ENCODE measurements at regions of chr19 and their contacts with region 1.

Region 1: GRCh38 chr19:46728693-46729676 is 12.1 kb upstream of the PRKD2 start:
- DNase-seq: no peak
- H3K4me3 ChIP-seq: no peak overlapping the region
- H3K27ac ChIP-seq: peak overlapping the region; percentile 27 to 64 (median 46)
- H3K4me1 ChIP-seq: peaks cover 15 to 57% (median 48%) of the 10 kb centered on the region in 4 donors
- H3K27me3 ChIP-seq: no peaks in the 10 kb centered on the region
- CTCF ChIP-seq: peak; percentile 88 to 96 (median 91)
- EP300 ChIP-seq: no peak
- POLR2A ChIP-seq: no peak

Region 2: DNA sequence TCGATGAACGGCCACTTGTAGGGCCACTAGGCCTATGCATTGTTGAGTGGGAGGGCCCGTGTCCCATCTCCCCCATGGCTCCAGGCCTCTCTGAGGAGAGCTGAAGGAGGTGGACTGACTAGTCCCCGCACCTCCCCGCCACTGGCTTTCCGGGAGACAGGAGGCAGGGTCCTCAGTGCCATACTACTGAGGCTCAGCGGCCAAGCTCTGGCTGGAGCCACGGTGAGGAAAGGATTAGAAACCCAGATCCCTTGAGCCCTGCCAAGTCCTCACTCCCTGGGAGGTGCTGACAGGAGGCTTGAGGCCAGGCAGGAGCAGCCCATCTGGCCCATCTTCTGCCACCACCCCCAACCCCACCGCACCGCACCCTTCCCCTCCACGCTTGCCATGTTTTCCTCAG is 344.6 kb before region 1 on chr19:
- intact Hi-C with region 1: no loop called
- DNase-seq: no peak
- H3K4me3 ChIP-seq: no peak overlapping the region
- H3K27ac ChIP-seq: no peak overlapping the region
- H3K4me1 ChIP-seq: peaks cover 3 to 18% (median 10%) of the 10 kb centered on the region in 4 donors
- H3K27me3 ChIP-seq: no peaks in the 10 kb centered on the region
- CTCF ChIP-seq: no peak
- EP300 ChIP-seq: no peak
- POLR2A ChIP-seq: no peak

Region 3: GRCh38 chr19:46616631-46617322 is 112.2 kb before region 1 on chr19:
- intact Hi-C with region 1: no loop called
- DNase-seq: no peak
- H3K4me3 ChIP-seq: no peak overlapping the region
- H3K27ac ChIP-seq: peak overlapping the region; percentile 15 to 59 (median 50)
- H3K4me1 ChIP-seq: peaks cover 49 to 66% (median 62%) of the 10 kb centered on the region in 4 donors
- H3K27me3 ChIP-seq: no peaks in the 10 kb centered on the region
- CTCF ChIP-seq: peak; percentile 28 to 57 (median 38)
- EP300 ChIP-seq: no peak
- POLR2A ChIP-seq: no peak

Region 4: DNA sequence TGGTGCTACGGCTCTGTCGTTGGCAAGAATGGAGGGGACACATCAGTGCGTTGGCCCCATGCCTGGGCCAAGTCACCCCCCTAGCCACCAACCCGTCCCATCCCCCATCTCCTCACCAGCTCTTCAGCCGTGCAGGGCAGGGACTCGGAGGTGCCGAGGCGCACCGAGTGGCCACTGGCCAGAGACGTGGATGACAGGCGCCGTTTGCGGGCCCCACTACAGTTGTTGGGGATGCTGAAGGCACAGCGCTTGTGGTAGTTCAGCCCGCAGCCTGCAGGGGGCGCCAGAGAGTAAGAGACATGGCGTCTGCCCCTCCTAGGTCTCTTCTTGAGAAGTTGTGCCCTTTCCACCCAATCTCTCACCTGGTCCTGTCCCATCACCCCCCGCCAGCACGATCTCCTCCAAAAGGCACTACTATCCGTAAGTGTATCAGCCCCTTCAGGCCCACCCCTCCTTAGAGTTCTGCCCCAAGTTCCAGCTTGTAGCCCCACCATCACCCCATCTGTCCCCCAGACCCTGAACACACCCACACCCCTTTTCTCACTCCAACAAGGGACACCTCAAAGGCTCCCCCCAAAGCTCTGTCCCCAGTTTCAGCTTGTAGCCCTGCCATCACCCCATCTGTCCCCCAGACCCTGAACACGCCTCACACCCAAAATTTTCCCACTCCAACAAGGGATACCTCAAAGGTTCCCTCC is 24.5 kb before region 1 on chr19:
- intact Hi-C with region 1: loop called (anchors 2 kb)
- DNase-seq: peak; percentile 95
- H3K4me3 ChIP-seq: no peak overlapping the region
- H3K27ac ChIP-seq: no peak overlapping the region
- H3K4me1 ChIP-seq: peaks cover 0 to 8% (median 0%) of the 10 kb centered on the region in 4 donors
- H3K27me3 ChIP-seq: no peaks in the 10 kb centered on the region
- CTCF ChIP-seq: peak; percentile 93 to 98 (median 96)
- EP300 ChIP-seq: no peak
- POLR2A ChIP-seq: no peak

Region 5: GRCh38 chr19:46766569-46767317 is 37.8 kb after region 1 on chr19:
- intact Hi-C with region 1: no loop called
- DNase-seq: no peak
- H3K4me3 ChIP-seq: no peak overlapping the region
- H3K27ac ChIP-seq: no peak overlapping the region
- H3K4me1 ChIP-seq: peaks cover 0 to 10% (median 2%) of the 10 kb centered on the region in 4 donors
- H3K27me3 ChIP-seq: no peaks in the 10 kb centered on the region
- CTCF ChIP-seq: peak; percentile 52 to 75 (median 55)
- EP300 ChIP-seq: no peak
- POLR2A ChIP-seq: no peak

Region 6: DNA sequence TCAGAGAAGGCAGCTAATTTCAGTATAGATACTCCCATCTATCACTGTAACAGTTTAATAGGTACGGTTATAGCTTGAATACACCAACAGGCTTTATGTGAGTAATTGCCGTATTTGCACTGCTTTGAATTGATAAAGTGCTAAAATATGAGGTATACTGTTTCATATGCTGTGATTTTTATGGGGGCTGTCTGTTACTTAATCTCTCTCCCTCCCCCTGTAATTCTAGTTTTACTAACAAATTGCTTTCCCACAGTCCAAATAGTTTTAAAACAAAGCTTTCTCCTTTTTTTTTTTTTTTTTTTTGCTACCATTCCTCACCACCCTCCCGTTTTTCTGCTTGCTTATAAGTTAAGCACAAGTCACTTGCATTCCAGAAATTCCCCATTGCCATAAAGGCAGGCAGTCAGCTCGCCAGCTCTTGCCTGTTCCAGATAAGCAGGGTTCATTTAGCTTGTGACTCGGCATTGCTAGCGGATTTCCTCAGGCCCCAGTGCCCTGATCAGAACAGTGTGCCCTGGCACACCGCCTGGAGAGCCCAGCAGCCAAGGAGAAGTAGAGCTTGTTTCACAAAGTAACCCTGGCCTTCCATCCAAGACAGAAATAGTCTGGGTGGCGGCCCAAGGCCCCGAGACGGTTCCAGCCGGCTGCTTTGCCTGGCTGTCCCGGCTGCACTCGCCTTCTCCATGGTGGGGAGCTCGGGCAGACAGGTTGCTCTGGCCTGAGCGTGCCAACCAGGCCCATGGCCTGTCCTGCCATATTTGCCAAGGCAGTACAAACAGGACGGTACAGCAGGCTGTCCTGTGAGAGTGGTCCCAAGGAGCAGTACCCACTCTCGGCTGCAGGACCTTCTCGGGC is 247.2 kb after region 1 on chr19:
- intact Hi-C with region 1: no loop called
- DNase-seq: peak; percentile 96
- H3K4me3 ChIP-seq: peak overlapping the region in 3 of 4 donors; percentile 1 to 27 (median 12)
- H3K27ac ChIP-seq: peak overlapping the region; percentile 80 to 91 (median 85)
- H3K4me1 ChIP-seq: peaks cover 75 to 100% (median 89%) of the 10 kb centered on the region in 4 donors
- H3K27me3 ChIP-seq: no peaks in the 10 kb centered on the region
- CTCF ChIP-seq: peak in 1 of 3 experiments; percentile 3
- EP300 ChIP-seq: no peak
- POLR2A ChIP-seq: no peak

Measured in esophagus muscularis mucosa (tissue), 4 donors.